A673 (cell line): ENCODE measurements at regions of chr10 and their contacts with region 1.

Region 1: GRCh38 chr10:68082872-68083271 is 7.8 kb upstream of the HERC4 start:
- DNase-seq: peak; percentile 66
- H3K4me3 ChIP-seq: no peak overlapping the region
- H3K27ac ChIP-seq: peak overlapping the region; percentile 34
- H3K4me1 ChIP-seq: peaks cover 27% of the 10 kb centered on the region
- H3K27me3 ChIP-seq: no peaks in the 10 kb centered on the region
- CTCF ChIP-seq: peak; percentile 66

Region 2: GRCh38 chr10:67861750-67862460 is 221.0 kb before region 1 on chr10:
- CTCF ChIA-PET with region 1: no interaction called
- POLR2A ChIA-PET with region 1: no interaction called
- intact Hi-C with region 1: loop called (anchors 5 kb)
- DNase-seq: no peak
- H3K4me3 ChIP-seq: no peak overlapping the region
- H3K27ac ChIP-seq: no peak overlapping the region
- H3K4me1 ChIP-seq: peaks cover 19% of the 10 kb centered on the region
- H3K27me3 ChIP-seq: no peaks in the 10 kb centered on the region
- CTCF ChIP-seq: no peak

Region 3: GRCh38 chr10:68053553-68053952 is 29.3 kb before region 1 on chr10:
- CTCF ChIA-PET with region 1: no interaction called
- POLR2A ChIA-PET with region 1: no interaction called
- intact Hi-C with region 1: no loop called
- DNase-seq: no peak
- H3K4me3 ChIP-seq: no peak overlapping the region
- H3K27ac ChIP-seq: no peak overlapping the region
- H3K4me1 ChIP-seq: peaks cover 20% of the 10 kb centered on the region
- H3K27me3 ChIP-seq: no peaks in the 10 kb centered on the region
- CTCF ChIP-seq: no peak

Region 4: DNA sequence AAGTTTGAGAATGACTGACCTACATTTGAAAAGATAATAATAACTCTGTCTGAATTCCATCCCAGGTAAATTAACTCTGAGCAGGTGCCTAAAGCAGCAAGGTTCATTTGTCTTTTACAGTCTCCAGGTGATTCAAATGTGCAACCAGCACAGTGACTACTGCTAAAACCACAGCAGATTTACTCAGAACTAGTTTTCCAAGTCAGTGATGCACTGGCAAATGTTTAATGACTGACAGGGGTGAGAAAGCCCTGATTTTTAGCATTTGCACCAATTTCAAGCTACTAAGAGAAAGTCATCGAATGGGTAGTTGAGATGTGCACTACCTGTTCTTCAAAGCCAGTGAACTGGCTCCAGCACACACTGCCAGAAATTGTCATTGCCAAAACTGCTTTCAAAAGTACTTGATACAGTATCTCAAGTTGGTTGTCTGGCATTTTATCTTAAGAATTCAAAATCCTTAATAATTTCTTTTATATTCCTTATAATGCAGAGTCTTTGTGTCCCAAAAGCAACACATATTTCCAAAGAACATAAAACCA is 88.7 kb after region 1 on chr10:
- CTCF ChIA-PET with region 1: no interaction called
- POLR2A ChIA-PET with region 1: no interaction called
- intact Hi-C with region 1: no loop called
- DNase-seq: no peak
- H3K4me3 ChIP-seq: no peak overlapping the region
- H3K27ac ChIP-seq: no peak overlapping the region
- H3K4me1 ChIP-seq: no peaks in the 10 kb centered on the region
- H3K27me3 ChIP-seq: no peaks in the 10 kb centered on the region
- CTCF ChIP-seq: no peak

Region 5: DNA sequence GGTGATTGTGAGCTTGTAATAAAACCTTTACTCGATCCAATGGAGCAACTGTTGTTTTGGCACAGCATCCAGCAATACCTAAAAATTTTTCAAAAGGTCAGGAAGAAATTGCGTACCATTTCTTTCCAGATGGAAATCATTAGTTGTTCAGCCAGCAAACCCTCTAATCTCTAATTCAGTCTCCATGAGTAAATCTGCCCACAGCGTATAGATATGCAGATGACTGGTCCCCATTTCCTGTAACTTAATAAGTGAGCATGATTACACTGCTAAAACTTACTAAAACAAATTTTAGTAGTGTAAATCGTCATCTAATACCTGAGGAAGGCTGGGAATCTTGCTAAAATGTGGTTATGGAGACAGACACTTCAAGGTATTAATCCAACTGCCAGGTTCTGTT is 433.9 kb after region 1 on chr10:
- CTCF ChIA-PET with region 1: no interaction called
- POLR2A ChIA-PET with region 1: no interaction called
- intact Hi-C with region 1: no loop called
- DNase-seq: peak; percentile 25
- H3K4me3 ChIP-seq: no peak overlapping the region
- H3K27ac ChIP-seq: no peak overlapping the region
- H3K4me1 ChIP-seq: peaks cover 8% of the 10 kb centered on the region
- H3K27me3 ChIP-seq: no peaks in the 10 kb centered on the region
- CTCF ChIP-seq: no peak